ENCODE measurements at regions of chr9 and their contacts with region 1.

Region 1: DNA sequence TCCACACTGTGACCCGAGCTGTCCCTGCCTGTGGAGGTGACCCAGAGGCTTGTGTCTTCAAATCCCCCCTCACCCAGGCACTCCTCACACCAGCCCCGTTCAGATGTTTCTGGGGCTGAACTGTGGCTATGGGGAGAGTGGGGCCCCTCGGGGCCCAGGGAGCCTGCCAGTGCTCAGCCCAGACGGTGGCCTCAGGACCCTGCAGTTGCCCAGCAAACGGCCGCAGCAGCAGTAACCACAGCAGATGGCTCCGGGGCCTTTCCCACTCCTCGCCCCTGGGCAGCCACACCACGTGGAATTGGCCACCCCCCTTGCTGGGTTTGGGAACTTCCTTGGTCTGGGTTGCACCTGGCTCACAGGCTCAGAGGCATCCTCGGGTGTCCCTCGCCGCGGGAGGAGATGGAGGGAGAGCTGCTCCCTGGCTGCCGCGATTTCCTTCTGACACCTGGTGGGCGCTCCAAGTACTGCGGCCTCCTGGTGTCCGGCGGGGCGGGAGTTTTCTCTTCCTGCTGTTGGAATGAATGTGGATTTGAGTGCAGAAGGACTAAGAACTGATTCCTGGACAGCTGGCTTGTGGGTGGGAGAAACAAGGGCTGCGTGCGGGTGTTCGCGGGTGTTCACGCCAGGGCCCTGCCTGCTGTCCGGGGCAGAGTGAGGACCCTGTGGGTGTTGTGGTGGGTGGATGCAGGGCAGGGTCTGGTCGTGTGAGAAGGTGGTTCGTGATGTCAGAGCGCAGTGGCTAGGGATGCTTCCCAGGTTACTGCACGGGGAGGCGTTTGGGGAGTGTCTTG is 97.5 kb downstream of the COL5A1 start:
- DNase-seq: peak; percentile 75 to 89 (median 83)
- H3K4me3 ChIP-seq: no peak overlapping the region
- H3K27ac ChIP-seq: no peak overlapping the region
- H3K4me1 ChIP-seq: peaks cover 16% of the 10 kb centered on the region
- H3K27me3 ChIP-seq: no peaks in the 10 kb centered on the region
- CTCF ChIP-seq: peak; percentile 93 to 96 (median 95)
- EP300 ChIP-seq: no peak
- POLR2A ChIP-seq: no peak

Region 2: GRCh38 chr9:134178768-134179551 is 560.1 kb before region 1 on chr9:
- intact Hi-C with region 1: loop called in 1 of 4 experiments (anchors 10 kb)
- DNase-seq: peak; percentile 80 to 91 (median 83)
- H3K4me3 ChIP-seq: no peak overlapping the region
- H3K27ac ChIP-seq: peak overlapping the region in 1 of 2 donors; percentile 69
- H3K4me1 ChIP-seq: peaks cover 20% of the 10 kb centered on the region
- H3K27me3 ChIP-seq: no peaks in the 10 kb centered on the region
- CTCF ChIP-seq: no peak
- EP300 ChIP-seq: no peak
- POLR2A ChIP-seq: no peak

Region 3: DNA sequence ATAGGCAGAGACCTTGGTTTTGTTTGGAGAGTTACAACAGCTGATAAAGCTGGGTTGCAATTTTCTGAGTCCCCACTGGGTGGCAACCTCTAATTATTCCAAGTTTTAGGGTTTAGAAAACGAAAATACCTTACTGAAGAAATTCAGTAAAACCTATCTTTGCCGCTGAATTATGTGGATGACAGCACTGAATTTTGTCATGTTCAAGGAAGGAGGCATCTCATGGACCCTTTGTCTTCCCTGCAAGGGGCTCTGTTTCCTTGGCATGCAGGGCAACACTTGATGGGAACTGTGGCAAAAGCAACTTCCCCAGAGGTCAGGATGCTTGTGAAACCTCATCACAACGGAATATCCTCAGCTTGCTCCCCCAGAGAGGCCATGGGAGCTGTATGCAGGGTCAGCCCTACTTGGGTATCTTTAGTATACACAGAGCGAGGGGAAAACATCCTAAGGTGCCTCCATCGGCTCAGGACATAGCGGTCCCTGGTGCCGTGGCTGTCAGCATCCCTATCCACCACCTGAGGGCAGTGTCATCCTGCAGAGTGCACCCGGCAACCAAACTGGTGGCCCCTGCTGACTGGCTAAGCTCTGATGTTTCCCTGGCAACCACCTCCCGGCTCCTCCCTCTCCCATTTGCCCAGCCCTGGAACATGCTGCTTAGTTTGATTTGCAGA is 289.7 kb before region 1 on chr9:
- intact Hi-C with region 1: loop called (anchors 2 to 5 kb)
- DNase-seq: peak; percentile 88 to 92 (median 89)
- H3K4me3 ChIP-seq: no peak overlapping the region
- H3K27ac ChIP-seq: no peak overlapping the region
- H3K4me1 ChIP-seq: no peaks in the 10 kb centered on the region
- H3K27me3 ChIP-seq: no peaks in the 10 kb centered on the region
- CTCF ChIP-seq: peak; percentile 79 to 95 (median 90)
- EP300 ChIP-seq: no peak
- POLR2A ChIP-seq: no peak

Region 4: GRCh38 chr9:134455934-134456739 is 282.9 kb before region 1 on chr9:
- intact Hi-C with region 1: loop called in 2 of 4 experiments (anchors 2 to 5 kb)
- DNase-seq: peak; percentile 79 to 89 (median 84)
- H3K4me3 ChIP-seq: peak overlapping the region; percentile 20
- H3K27ac ChIP-seq: peak overlapping the region; percentile 77 to 87
- H3K4me1 ChIP-seq: peaks cover 11% of the 10 kb centered on the region
- H3K27me3 ChIP-seq: no peaks in the 10 kb centered on the region
- CTCF ChIP-seq: no peak
- EP300 ChIP-seq: no peak
- POLR2A ChIP-seq: no peak

Region 5: DNA sequence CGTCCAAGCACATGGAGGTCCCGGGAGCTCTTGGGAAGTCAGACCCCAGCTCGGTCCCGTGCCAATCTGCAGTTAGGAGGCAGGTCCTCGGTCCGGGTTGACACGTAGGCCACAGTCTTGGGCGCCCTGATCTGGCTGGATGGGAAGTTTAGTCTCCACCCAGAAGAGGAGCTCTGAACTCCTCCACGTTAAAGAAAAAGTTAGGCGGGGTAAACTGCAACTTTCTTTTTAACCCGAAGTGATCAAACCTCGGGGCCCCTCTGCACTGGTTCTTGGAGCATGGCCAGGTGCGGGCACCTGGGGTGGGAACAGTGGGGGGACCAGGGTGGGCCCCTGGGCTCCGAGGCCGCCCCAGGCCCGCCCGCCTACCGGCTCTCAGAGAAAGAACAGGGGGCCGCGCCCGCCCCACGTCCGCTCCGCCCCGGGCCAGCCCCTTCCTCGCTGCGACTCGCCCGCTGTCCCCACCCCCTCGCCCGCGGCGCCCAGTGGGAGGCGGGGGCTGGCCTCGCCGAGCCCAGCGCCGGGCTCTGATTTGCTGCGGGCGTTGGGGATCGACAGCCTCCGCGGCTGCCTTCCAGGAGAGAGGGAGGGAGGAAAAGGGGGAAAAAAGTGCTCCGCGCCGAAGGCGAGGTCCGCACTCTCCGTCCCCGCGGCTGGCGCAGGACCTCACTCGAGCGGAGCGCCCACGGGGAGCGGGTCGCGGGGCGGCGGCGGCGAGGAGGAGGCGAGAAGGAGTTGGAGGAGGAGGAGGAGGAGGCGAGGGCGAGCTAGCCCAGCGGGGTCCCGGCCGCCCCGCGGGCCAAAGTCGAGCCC is 97.7 kb before region 1 on chr9 and contains the start of gene COL5A1:
- intact Hi-C with region 1: loop called in 1 of 4 experiments (anchors 5 kb)
- DNase-seq: peak; percentile 92 to 94 (median 93)
- H3K4me3 ChIP-seq: peak within 1 kb of the TSS; percentile 86
- H3K27ac ChIP-seq: peak within 1 kb of the TSS; percentile 64 to 83
- H3K4me1 ChIP-seq: peaks cover 13% of the 10 kb centered on the region
- H3K27me3 ChIP-seq: no peaks in the 10 kb centered on the region
- CTCF ChIP-seq: peak in 2 of 3 donors; percentile 50 to 54
- EP300 ChIP-seq: no peak
- POLR2A ChIP-seq: peak; percentile 85
- total RNA-seq, gene COL5A1: 28.1 to 117 (median 58.6) TPM

Region 6: GRCh38 chr9:134698587-134699342 is 40.3 kb before region 1 on chr9:
- intact Hi-C with region 1: loop called (anchors 1 to 5 kb)
- DNase-seq: peak; percentile 66 to 84 (median 81)
- H3K4me3 ChIP-seq: no peak overlapping the region
- H3K27ac ChIP-seq: no peak overlapping the region
- H3K4me1 ChIP-seq: peaks cover 2% of the 10 kb centered on the region
- H3K27me3 ChIP-seq: no peaks in the 10 kb centered on the region
- CTCF ChIP-seq: peak; percentile 72 to 95 (median 92)
- EP300 ChIP-seq: no peak
- POLR2A ChIP-seq: no peak

Region 7: DNA sequence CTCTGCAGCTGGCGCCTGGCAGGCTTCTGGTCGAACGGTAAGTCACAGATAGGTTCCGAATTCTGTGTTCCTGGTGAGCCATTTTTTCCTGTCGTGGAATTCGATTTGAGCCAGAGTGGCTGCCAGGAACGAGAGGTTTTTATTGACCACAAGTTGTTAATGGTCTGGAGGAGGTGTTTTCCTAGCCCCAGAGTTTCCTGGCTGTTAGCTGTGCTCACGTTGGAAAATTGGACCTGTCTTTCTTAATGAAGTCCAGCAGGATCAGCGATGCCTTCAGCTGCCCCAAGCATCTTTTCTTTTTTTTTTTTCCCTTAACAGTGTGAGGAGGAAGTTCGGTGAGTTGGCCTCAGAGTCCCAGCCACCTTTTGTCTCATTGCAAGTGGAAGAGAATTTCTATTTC is 34.6 kb before region 1 on chr9:
- intact Hi-C with region 1: loop called in 3 of 4 experiments (anchors 2 to 5 kb)
- DNase-seq: no peak
- H3K4me3 ChIP-seq: no peak overlapping the region
- H3K27ac ChIP-seq: no peak overlapping the region
- H3K4me1 ChIP-seq: peaks cover 26% of the 10 kb centered on the region
- H3K27me3 ChIP-seq: no peaks in the 10 kb centered on the region
- CTCF ChIP-seq: no peak
- EP300 ChIP-seq: no peak
- POLR2A ChIP-seq: no peak